Endothelial cell of umbilical vein (primary cell): ENCODE measurements at regions of chr4 and their contacts with region 1.

Region 1: DNA sequence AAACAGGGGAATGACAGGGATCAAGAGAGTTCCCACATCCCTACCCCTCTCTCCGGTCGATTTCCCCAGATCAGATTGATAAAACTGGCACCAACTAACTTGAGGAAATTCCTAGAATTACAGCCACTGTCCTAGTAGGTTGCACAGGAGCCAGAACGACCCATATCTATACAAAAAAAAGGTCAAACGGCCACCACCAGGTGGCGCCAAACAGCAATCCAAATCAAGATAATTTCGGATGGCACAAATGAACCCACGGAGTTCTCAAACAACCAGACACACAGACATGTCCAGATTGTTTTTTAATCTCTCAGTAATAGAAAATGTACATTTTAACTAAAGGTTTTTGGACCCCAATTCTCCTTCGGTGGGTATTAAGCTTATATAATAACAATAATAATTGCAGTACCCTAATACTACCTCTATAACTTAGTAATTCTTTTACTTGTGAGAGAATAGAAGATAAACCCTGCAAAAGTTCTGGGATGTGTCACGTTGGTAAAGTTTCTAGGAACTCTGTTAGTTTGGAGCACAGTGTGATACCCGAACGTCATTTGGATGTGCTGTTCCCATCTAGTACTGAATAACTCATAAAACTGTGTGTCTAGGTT is 212.6 kb downstream of the SPOCK3 start:
- DNase-seq: peak; percentile 70
- H3K4me3 ChIP-seq: no peak overlapping the region
- H3K27ac ChIP-seq: no peak overlapping the region
- H3K4me1 ChIP-seq: no peaks in the 10 kb centered on the region
- H3K27me3 ChIP-seq: no peaks in the 10 kb centered on the region
- CTCF ChIP-seq: peak; percentile 70 to 77
- POLR2A ChIP-seq: no peak

Region 2: DNA sequence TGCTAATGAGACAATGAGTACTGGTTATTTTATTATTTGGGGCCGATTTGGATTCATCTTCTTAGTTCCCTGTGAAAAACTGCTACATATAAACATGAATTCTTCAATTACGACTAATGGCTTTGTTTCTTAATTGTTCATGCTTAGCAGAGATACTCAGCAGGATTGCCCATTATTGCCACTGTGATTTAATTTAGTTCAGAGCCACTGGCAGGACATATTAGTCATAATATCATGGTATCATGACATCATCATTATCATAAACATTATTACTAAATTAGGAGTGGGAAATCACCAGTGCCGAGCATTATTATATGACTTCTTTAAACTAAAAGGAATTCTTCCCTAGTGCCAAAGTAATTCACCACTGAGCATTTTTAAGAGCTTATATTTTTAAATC is 11.2 kb after region 1 on chr4:
- CTCF ChIA-PET with region 1: interaction called, 10 read pairs
- POLR2A ChIA-PET with region 1: no interaction called
- dilution Hi-C with region 1: no loop called
- intact Hi-C with region 1: no loop called
- DNase-seq: peak; percentile 69
- H3K4me3 ChIP-seq: no peak overlapping the region
- H3K27ac ChIP-seq: no peak overlapping the region
- H3K4me1 ChIP-seq: peaks cover 24% of the 10 kb centered on the region
- H3K27me3 ChIP-seq: no peaks in the 10 kb centered on the region
- CTCF ChIP-seq: no peak
- POLR2A ChIP-seq: no peak

Region 3: GRCh38 chr4:167234316-167234881 is 212.7 kb after region 1 on chr4 and contains the start of gene SPOCK3:
- CTCF ChIA-PET with region 1: interaction called, 7 read pairs
- POLR2A ChIA-PET with region 1: no interaction called
- dilution Hi-C with region 1: no loop called
- intact Hi-C with region 1: loop called (anchors 2 kb)
- DNase-seq: peak; percentile 41
- H3K4me3 ChIP-seq: peak within 1 kb of the TSS; percentile 38 to 96 (median 78)
- H3K27ac ChIP-seq: no peak within 1 kb of the TSS
- H3K4me1 ChIP-seq: peaks cover 7% of the 10 kb centered on the region
- H3K27me3 ChIP-seq: peaks cover 18 to 41% of the 10 kb centered on the region in 2 experiments
- CTCF ChIP-seq: no peak
- POLR2A ChIP-seq: no peak
- total RNA-seq, gene SPOCK3: not detected in 2 replicates

Region 4: GRCh38 chr4:167290678-167291077 is 269.0 kb after region 1 on chr4:
- CTCF ChIA-PET with region 1: interaction called, 18 read pairs
- POLR2A ChIA-PET with region 1: no interaction called
- dilution Hi-C with region 1: no loop called
- intact Hi-C with region 1: loop called (anchors 1 kb)
- DNase-seq: peak; percentile 11
- H3K4me3 ChIP-seq: no peak overlapping the region
- H3K27ac ChIP-seq: no peak overlapping the region
- H3K4me1 ChIP-seq: no peaks in the 10 kb centered on the region
- H3K27me3 ChIP-seq: no peaks in the 10 kb centered on the region
- CTCF ChIP-seq: peak; percentile 12 to 18
- POLR2A ChIP-seq: no peak

Region 5: DNA sequence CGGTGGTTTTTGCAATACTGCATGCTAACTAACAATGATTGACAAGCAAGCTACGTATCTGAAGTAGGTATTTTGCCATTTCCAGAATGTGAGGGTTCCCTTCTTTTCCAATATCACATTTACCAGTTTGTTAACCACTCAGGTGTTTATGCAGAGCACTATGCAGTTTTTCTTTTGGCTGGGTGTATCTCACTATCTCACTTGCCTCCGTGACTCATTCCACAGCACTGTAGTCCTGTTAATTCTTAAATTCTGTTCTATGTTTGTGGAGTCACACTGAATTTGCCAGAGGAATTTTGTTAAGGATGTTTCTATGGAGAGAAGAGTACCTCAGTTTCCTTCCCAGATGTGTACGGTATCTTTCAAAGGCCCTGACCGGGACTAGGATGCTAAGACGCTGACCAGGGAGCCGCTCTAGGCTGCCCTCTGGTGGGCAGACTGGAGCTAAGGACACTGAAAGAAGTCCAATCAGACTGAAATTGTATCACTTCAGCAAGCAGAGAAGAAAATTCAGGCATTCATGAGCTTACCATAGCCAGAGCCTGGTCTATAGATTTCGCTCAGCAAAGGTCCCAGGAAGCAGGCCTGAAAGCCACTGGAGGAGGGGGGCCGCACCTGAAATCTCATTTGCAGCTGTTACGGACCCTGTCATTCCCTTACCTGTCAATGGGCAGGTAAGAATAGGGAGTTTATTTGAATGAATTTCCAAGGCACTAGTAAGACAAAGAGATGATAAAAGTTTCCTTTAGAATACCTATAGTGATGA is 601.0 kb after region 1 on chr4:
- CTCF ChIA-PET with region 1: interaction called, 13 read pairs
- POLR2A ChIA-PET with region 1: no interaction called
- dilution Hi-C with region 1: no loop called
- intact Hi-C with region 1: loop called (anchors 1 kb)
- DNase-seq: peak; percentile 53
- H3K4me3 ChIP-seq: no peak overlapping the region
- H3K27ac ChIP-seq: no peak overlapping the region
- H3K4me1 ChIP-seq: no peaks in the 10 kb centered on the region
- H3K27me3 ChIP-seq: no peaks in the 10 kb centered on the region
- CTCF ChIP-seq: peak; percentile 78 to 91
- POLR2A ChIP-seq: no peak

Region 6: DNA sequence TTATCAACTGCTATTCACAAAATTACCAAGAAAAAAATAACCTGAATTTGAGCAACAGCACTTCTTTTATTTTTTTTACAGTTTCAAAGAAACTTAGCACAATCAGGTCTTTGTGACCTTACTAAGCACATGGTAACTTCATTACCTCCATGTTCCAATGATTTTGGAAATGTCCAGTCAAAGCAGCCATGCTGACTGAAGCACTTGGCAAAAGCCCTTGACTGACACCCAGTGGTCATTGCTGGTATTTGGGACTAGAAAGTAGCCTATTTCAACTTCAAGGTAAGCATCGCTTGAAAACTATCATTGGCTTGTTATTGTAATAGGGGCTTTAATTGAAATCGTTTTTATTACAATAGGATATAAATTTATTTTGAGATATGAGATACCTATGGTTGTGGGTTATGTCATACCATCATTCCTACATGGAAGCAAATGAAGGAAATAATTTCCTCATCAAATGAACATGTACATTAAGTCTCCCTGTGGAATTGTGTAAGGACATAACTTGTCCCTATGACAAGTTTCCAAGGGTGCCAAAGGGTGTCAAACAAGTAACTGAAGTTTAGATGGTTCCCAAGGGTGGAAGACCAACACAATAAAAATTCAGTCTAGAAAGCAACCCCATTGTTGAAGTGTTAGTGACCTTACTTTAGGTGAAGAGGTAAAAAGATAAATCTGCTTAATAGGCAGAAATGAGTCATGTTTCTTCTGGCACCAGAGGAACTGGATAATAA is 1055.5 kb after region 1 on chr4:
- CTCF ChIA-PET with region 1: no interaction called
- POLR2A ChIA-PET with region 1: no interaction called
- dilution Hi-C with region 1: no loop called
- intact Hi-C with region 1: loop called (anchors 1 kb)
- DNase-seq: peak; percentile 81
- H3K4me3 ChIP-seq: no peak overlapping the region
- H3K27ac ChIP-seq: no peak overlapping the region
- H3K4me1 ChIP-seq: peaks cover 8% of the 10 kb centered on the region
- H3K27me3 ChIP-seq: no peaks in the 10 kb centered on the region
- CTCF ChIP-seq: peak; percentile 73 to 75
- POLR2A ChIP-seq: no peak